ENCODE measurements at regions of chr14 and their contacts with region 1.

Region 1: DNA sequence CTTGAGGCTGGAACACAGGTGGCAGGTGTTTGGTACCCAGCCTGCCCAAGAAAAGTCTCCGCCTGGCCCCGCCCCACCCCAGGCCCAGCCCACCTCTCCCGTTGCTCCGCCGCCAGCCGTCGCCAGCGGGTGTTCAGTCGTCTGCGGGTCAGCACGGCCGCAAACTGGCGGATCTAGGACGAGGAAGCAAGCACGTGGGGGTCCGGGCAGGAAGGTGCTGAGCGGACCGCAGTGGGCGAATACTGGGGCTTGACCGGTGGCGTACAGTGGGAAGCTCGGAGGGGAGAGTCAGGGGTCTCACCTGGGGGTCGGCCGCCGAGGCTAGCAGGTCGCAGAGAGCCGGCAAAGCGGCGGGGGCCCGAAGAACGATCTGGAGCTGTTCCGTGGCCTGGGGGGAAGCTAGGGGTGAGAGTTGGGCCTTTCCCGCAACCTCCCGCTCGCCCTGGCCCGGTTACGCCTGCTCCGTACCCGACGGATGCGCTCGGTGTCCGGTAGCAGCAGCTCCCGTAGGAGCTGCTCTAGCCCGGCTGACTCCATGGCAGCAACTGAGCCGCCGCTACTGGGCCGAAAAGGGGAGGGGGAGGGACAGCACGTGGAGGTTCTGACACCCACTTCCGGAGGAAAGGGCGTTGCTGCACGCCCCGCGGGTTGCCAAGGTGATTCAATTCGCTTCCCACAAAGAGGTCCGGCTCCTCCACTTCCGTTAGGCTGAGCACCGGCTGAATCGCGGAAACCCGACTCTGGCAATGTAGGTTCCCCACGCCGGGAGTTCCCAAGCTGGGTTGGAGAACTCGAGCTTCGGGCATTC is at the start of gene IPO4:
- DNase-seq: peak; percentile 75 to 97 (median 94)
- ATAC-seq: peak; percentile 97
- H3K4me3 ChIP-seq: peak within 1 kb of the TSS; percentile 89
- H3K4me3 Mint-ChIP-seq: peak within 1 kb of the TSS; percentile 89 to 96 (median 90)
- H3K27ac ChIP-seq: peak within 1 kb of the TSS; percentile 83
- H3K27ac Mint-ChIP-seq: peak within 1 kb of the TSS; percentile 82 to 96 (median 92)
- H3K4me1 ChIP-seq: peaks cover 15 to 16% of the 10 kb centered on the region in 2 donors
- H3K4me1 Mint-ChIP-seq: peaks cover 24 to 53% (median 47%) of the 10 kb centered on the region in 7 donors
- H3K27me3 ChIP-seq: no peaks in the 10 kb centered on the region
- H3K27me3 Mint-ChIP-seq: no peaks in the 10 kb centered on the region
- total RNA-seq, gene IPO4: 21.5 to 45.2 (median 42.2) TPM

Region 2: DNA sequence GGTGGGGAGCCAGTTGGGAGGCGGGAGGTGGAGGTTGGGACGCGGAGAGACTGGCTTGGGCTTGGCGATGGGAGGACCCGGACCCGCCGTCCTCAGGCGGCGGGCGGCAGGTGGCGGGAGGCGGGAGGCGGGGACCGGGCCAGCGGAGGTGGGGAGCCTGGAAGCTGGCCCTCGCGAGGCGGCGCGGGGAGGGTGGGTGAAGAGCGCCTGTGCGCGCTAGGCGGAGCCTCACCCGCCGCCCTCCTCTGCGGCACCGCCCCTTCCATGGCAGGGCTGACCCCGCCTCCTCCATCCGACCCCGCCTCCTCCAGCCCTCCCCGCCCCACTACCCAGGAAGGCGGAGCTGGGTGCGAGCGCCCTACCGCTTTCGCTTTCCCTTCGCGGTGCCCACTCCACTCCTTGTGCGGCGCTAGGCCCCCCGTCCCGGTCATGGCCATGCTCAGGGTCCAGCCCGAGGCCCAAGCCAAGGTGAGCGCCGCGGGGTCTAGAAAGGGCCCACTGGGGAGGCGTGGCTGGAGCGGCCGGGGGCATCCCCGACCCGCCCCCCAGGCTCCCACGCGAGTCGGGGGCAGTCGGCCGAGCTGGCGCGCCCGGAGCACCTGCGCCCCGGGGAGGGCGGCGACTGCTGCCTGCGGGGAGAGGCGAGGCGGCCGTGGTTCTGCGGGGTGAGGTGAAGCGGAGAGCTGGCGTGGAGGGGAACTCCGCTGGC is 52.5 kb before region 1 on chr14 and contains the start of gene PSME1:
- CTCF ChIA-PET with region 1: interaction called, 3 read pairs
- POLR2A ChIA-PET with region 1: interaction called, 4 read pairs
- intact Hi-C with region 1: loop called in 1 of 2 experiments (anchors 1 kb)
- DNase-seq: peak; percentile 88 to 97 (median 92)
- ATAC-seq: peak; percentile 99
- H3K4me3 ChIP-seq: peak within 1 kb of the TSS; percentile 83
- H3K4me3 Mint-ChIP-seq: peak within 1 kb of the TSS; percentile 88 to 95 (median 92)
- H3K27ac ChIP-seq: peak within 1 kb of the TSS; percentile 97
- H3K27ac Mint-ChIP-seq: peak within 1 kb of the TSS; percentile 86 to 98 (median 93)
- H3K4me1 ChIP-seq: peaks cover 16 to 37% of the 10 kb centered on the region in 2 donors
- H3K4me1 Mint-ChIP-seq: peaks cover 48 to 71% (median 64%) of the 10 kb centered on the region in 7 donors
- H3K27me3 ChIP-seq: no peaks in the 10 kb centered on the region
- H3K27me3 Mint-ChIP-seq: no peaks in the 10 kb centered on the region
- total RNA-seq, gene PSME1: 189 to 583 (median 202) TPM

Region 3: DNA sequence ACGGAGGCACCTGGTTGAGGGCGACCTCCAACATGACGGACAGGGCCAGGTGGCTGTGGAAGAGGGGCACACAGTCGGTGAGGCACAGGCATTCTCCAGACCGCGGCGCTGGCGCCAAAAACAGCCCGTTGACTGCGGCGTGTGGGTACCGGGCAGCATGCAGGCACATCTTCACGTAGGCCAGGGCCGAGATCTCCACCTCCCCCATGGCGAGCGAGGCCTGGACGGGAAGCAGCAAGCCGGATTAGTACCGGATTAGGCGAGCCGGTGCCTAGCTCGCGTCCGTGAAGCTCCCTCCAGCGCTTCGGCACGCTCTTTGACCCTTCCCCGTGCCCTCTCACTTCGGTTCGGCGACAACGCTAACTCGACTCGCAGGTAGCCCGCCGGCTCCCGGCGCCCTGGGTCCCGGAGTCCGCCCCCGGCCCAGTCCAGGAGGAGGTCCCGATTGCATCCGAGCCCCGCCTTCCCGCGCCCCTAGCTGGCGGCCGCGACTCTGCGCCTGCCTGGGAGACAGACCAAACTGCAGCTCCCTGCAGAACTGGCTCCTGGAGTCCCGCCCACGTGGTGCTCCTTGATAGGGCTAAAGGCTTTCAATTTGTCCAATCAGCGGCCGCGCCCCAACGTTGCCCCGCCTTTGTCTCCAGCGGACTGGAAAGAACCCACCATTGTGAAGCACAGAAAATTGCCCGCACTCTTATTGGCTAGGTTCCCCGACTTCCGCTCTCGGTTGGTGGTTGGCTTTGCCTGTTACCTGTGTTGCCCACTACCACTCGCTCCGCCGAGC is 47.2 kb before region 1 on chr14 and contains the start of gene EMC9:
- CTCF ChIA-PET with region 1: interaction called, 3 read pairs
- POLR2A ChIA-PET with region 1: interaction called, 4 read pairs
- intact Hi-C with region 1: loop called (anchors 1 kb)
- DNase-seq: peak; percentile 90 to 100 (median 99)
- ATAC-seq: peak; percentile 94
- H3K4me3 ChIP-seq: peak within 1 kb of the TSS; percentile 87
- H3K4me3 Mint-ChIP-seq: peak within 1 kb of the TSS; percentile 85 to 100 (median 94)
- H3K27ac ChIP-seq: peak within 1 kb of the TSS; percentile 83
- H3K27ac Mint-ChIP-seq: peak within 1 kb of the TSS; percentile 83 to 96 (median 93)
- H3K4me1 ChIP-seq: peaks cover 33 to 43% of the 10 kb centered on the region in 2 donors
- H3K4me1 Mint-ChIP-seq: peaks cover 47 to 87% (median 77%) of the 10 kb centered on the region in 7 donors
- H3K27me3 ChIP-seq: no peaks in the 10 kb centered on the region
- H3K27me3 Mint-ChIP-seq: no peaks in the 10 kb centered on the region
- total RNA-seq, gene EMC9: 9.0 to 25.5 (median 22.3) TPM

Region 4: GRCh38 chr14:24171422-24172260 is 16.8 kb before region 1 on chr14 and contains the start of gene REC8:
- CTCF ChIA-PET with region 1: no interaction called
- POLR2A ChIA-PET with region 1: interaction called, 3 read pairs
- intact Hi-C with region 1: loop called in 1 of 2 experiments (anchors 1 kb)
- DNase-seq: peak in 8 of 9 donors; percentile 43 to 81 (median 76)
- ATAC-seq: peak; percentile 88
- H3K4me3 ChIP-seq: peak within 1 kb of the TSS; percentile 58
- H3K4me3 Mint-ChIP-seq: peak within 1 kb of the TSS; percentile 80 to 94 (median 88)
- H3K27ac ChIP-seq: peak within 1 kb of the TSS; percentile 40
- H3K27ac Mint-ChIP-seq: peak within 1 kb of the TSS; percentile 48 to 93 (median 80)
- H3K4me1 ChIP-seq: peaks cover 0 to 13% of the 10 kb centered on the region in 2 donors
- H3K4me1 Mint-ChIP-seq: peaks cover 12 to 53% (median 43%) of the 10 kb centered on the region in 7 donors
- H3K27me3 ChIP-seq: no peaks in the 10 kb centered on the region
- H3K27me3 Mint-ChIP-seq: no peaks in the 10 kb centered on the region
- total RNA-seq, gene REC8: 20.3 to 80.5 (median 68.6) TPM

Region 5: GRCh38 chr14:24207104-24207551 is 18.7 kb after region 1 on chr14:
- CTCF ChIA-PET with region 1: interaction called, 3 read pairs
- POLR2A ChIA-PET with region 1: interaction called, 79 read pairs
- intact Hi-C with region 1: no loop called
- DNase-seq: no peak
- ATAC-seq: peak; percentile 37
- H3K4me3 ChIP-seq: no peak overlapping the region
- H3K4me3 Mint-ChIP-seq: no peak overlapping the region
- H3K27ac ChIP-seq: no peak overlapping the region
- H3K27ac Mint-ChIP-seq: peak overlapping the region in 6 of 9 donors; percentile 10 to 57 (median 32)
- H3K4me1 ChIP-seq: peaks cover 8 to 10% of the 10 kb centered on the region in 2 donors
- H3K4me1 Mint-ChIP-seq: peaks cover 26 to 62% (median 47%) of the 10 kb centered on the region in 7 donors
- H3K27me3 ChIP-seq: no peaks in the 10 kb centered on the region
- H3K27me3 Mint-ChIP-seq: no peaks in the 10 kb centered on the region

Region 6: GRCh38 chr14:24232121-24232644 is 43.7 kb after region 1 on chr14 and contains the start of gene NEDD8:
- CTCF ChIA-PET with region 1: no interaction called
- POLR2A ChIA-PET with region 1: interaction called, 3 read pairs
- intact Hi-C with region 1: loop called (anchors 1 kb)
- DNase-seq: peak; percentile 72 to 91 (median 88)
- ATAC-seq: peak; percentile 91
- H3K4me3 ChIP-seq: peak within 1 kb of the TSS; percentile 99
- H3K4me3 Mint-ChIP-seq: peak within 1 kb of the TSS; percentile 86 to 100 (median 96)
- H3K27ac ChIP-seq: peak within 1 kb of the TSS; percentile 89
- H3K27ac Mint-ChIP-seq: peak within 1 kb of the TSS; percentile 89 to 98 (median 93)
- H3K4me1 ChIP-seq: peaks cover 11 to 27% of the 10 kb centered on the region in 2 donors
- H3K4me1 Mint-ChIP-seq: peaks cover 36 to 79% (median 63%) of the 10 kb centered on the region in 7 donors
- H3K27me3 ChIP-seq: no peaks in the 10 kb centered on the region
- H3K27me3 Mint-ChIP-seq: no peaks in the 10 kb centered on the region
- total RNA-seq, gene NEDD8: 73.5 to 175 (median 106) TPM

Measured in naive thymus-derived CD4-positive, alpha-beta T cell (primary cell).